AG04449 (cell line): ENCODE measurements at regions of chr15 and their contacts with region 1.

Region 1: DNA sequence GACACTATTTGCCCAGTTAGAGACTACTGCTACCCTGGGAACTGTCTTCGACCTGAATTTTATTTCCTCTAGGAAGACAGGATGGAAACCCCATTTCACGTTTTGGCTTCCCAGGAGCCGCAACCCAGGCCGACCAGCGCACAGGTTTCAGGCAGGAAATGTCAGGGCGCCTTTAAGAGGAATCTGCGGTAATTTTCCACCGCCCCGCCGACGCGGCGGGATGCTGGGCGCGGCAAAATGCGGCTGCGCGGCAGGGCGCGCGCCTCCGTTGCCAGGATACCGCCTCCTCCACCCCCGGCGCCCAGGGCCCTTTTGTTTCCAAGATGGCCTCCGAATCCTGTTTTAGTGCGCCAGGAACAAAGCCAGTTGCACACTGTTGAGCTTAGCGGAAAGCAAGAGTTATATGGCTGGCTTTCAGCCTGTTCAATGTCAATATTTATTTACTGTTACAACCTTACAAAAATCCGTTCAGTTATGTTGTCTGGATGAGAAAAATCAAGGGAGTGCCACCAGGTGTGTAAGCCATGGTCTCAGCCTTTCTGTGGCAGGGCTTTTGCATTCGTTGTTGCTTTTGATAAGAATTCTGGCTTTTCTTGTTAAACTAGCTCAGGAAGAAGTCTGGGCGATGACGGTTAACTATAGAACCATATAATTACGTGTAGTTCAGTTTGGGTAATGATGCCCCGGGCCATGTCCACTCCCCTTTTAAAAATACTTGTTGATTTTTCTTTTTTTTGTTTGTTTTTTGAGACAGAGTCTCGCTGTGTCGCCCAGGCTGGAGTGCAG is 79.7 kb upstream of the CHD2 start:
- DNase-seq: no peak
- H3K4me3 ChIP-seq: peak overlapping the region; percentile 44
- CTCF ChIP-seq: no peak

Region 2: GRCh38 chr15:92808978-92809879 is 11.2 kb before region 1 on chr15:
- CTCF ChIA-PET with region 1: interaction called, 24 read pairs
- POLR2A ChIA-PET with region 1: interaction called, 16 read pairs
- DNase-seq: no peak
- H3K4me3 ChIP-seq: peak overlapping the region; percentile 60
- CTCF ChIP-seq: peak; percentile 73

Region 3: DNA sequence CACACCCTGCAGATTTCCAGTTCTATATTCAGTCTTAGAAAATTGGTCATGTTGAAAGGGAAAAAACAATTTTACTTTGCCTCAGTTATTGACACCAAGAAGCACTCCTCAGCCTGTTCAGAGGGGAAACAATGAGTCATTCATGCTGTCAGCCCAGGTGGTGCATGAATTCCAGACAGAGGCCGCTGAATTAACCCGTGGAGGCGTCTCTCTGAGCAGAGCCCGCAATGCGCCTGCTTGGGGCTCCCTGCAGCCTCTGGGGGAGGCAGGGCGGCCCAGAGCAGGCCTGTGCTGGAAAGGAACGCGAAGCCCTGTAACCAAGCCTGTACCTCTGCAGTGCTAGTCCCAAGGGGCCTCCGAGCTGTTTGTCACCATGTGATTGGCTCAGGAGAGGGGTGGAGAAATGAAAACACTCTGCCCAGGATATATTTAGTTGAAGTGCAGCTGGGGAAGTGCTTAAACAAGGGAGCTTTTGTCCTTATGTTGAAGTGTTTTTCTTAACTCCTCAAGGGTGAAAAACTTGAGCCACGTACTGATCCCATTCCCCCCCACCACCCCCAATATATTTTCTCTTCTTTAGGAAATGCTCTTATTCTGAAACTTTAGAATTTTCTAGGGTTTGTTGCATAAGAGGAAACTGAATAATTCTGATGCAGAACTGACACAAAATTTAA is 11.4 kb after region 1 on chr15:
- CTCF ChIA-PET with region 1: interaction called, 12 read pairs
- POLR2A ChIA-PET with region 1: interaction called, 8 read pairs
- DNase-seq: peak; percentile 73
- H3K4me3 ChIP-seq: peak overlapping the region; percentile 8
- CTCF ChIP-seq: no peak

Region 4: GRCh38 chr15:92845126-92845508 is 24.7 kb after region 1 on chr15:
- CTCF ChIA-PET with region 1: no interaction called
- POLR2A ChIA-PET with region 1: no interaction called
- DNase-seq: no peak
- H3K4me3 ChIP-seq: no peak overlapping the region
- CTCF ChIP-seq: no peak